B cell (primary cell): ENCODE measurements at regions of chr12 and their contacts with region 1.

Region 1: GRCh38 chr12:71685914-71686665 is at the start of gene TMEM19:
- DNase-seq: peak; percentile 94
- ATAC-seq: peak; percentile 91
- H3K4me3 ChIP-seq: peak within 1 kb of the TSS; percentile 70 to 99 (median 81)
- H3K4me3 Mint-ChIP-seq: peak within 1 kb of the TSS; percentile 97
- H3K27ac ChIP-seq: peak within 1 kb of the TSS; percentile 83 to 95
- H3K27ac Mint-ChIP-seq: peak within 1 kb of the TSS; percentile 96
- H3K4me1 ChIP-seq: peaks cover 53 to 54% of the 10 kb centered on the region in 2 donors
- H3K4me1 Mint-ChIP-seq: peaks cover 49% of the 10 kb centered on the region
- H3K27me3 ChIP-seq: no peaks in the 10 kb centered on the region
- H3K27me3 Mint-ChIP-seq: no peaks in the 10 kb centered on the region
- CTCF ChIP-seq: no peak
- total RNA-seq, gene TMEM19: 39.4 and 45.5 TPM in 2 replicates

Region 2: GRCh38 chr12:71236133-71236660 is 449.9 kb before region 1 on chr12:
- CTCF ChIA-PET with region 1: no interaction called
- POLR2A ChIA-PET with region 1: no interaction called
- intact Hi-C with region 1: no loop called
- DNase-seq: no peak
- ATAC-seq: no peak
- H3K4me3 ChIP-seq: no peak overlapping the region
- H3K4me3 Mint-ChIP-seq: no peak overlapping the region
- H3K27ac ChIP-seq: no peak overlapping the region
- H3K27ac Mint-ChIP-seq: no peak overlapping the region
- H3K4me1 ChIP-seq: no peaks in the 10 kb centered on the region
- H3K4me1 Mint-ChIP-seq: no peaks in the 10 kb centered on the region
- H3K27me3 ChIP-seq: no peaks in the 10 kb centered on the region
- H3K27me3 Mint-ChIP-seq: no peaks in the 10 kb centered on the region
- CTCF ChIP-seq: no peak

Region 3: GRCh38 chr12:71671816-71672215 is 14.3 kb before region 1 on chr12:
- CTCF ChIA-PET with region 1: interaction called, 13 read pairs
- POLR2A ChIA-PET with region 1: no interaction called
- intact Hi-C with region 1: no loop called
- DNase-seq: no peak
- ATAC-seq: no peak
- H3K4me3 ChIP-seq: no peak overlapping the region
- H3K4me3 Mint-ChIP-seq: no peak overlapping the region
- H3K27ac ChIP-seq: no peak overlapping the region
- H3K27ac Mint-ChIP-seq: no peak overlapping the region
- H3K4me1 ChIP-seq: no peaks in the 10 kb centered on the region
- H3K4me1 Mint-ChIP-seq: peaks cover 9% of the 10 kb centered on the region
- H3K27me3 ChIP-seq: no peaks in the 10 kb centered on the region
- H3K27me3 Mint-ChIP-seq: no peaks in the 10 kb centered on the region
- CTCF ChIP-seq: no peak

Region 4: GRCh38 chr12:71840231-71840847 is 154.2 kb after region 1 on chr12:
- CTCF ChIA-PET with region 1: no interaction called
- POLR2A ChIA-PET with region 1: no interaction called
- intact Hi-C with region 1: loop called (anchors 1 kb)
- DNase-seq: no peak
- ATAC-seq: no peak
- H3K4me3 ChIP-seq: peak overlapping the region; percentile 61 to 90 (median 80)
- H3K4me3 Mint-ChIP-seq: peak overlapping the region; percentile 94
- H3K27ac ChIP-seq: peak overlapping the region; percentile 99
- H3K27ac Mint-ChIP-seq: peak overlapping the region; percentile 95
- H3K4me1 ChIP-seq: peaks cover 21% of the 10 kb centered on the region in 2 donors
- H3K4me1 Mint-ChIP-seq: peaks cover 33% of the 10 kb centered on the region
- H3K27me3 ChIP-seq: no peaks in the 10 kb centered on the region
- H3K27me3 Mint-ChIP-seq: peaks cover 2% of the 10 kb centered on the region
- CTCF ChIP-seq: no peak